Posterior vena cava (tissue), 2 donors: ENCODE measurements at regions of chr1 and their contacts with region 1.

Region 1: GRCh38 chr1:44390277-44390676 is 14.8 kb upstream of the RNF220 start:
- DNase-seq: no peak

Region 2: DNA sequence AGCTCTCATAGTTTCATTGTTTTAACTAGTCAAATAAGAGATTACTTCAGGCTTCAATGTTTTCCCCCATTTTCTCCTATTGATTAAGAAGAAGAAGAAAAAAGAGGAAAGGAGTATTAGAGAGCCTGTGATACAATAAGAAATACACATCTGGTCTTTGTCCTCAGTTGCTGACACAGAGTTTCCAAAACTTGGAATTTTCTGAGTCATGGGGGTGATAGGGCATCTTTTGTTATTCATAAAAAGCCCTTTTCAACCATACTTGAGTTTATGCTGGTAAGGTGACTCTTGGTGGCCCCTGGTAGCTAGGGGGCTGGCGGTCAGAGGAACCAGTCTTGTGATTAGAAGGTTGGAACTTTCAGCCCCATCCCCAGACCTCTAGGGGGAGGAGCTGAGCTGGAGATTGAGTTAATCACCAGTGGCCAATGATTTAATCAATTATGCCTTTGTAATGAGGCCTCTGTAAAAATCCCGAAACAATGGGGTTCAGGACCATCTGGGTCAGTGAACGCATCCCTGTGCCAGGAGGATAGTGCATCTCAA is 219.9 kb before region 1 on chr1:
- intact Hi-C with region 1: no loop called
- DNase-seq: no peak

Region 3: GRCh38 chr1:44305962-44306422 is 84.3 kb before region 1 on chr1:
- intact Hi-C with region 1: no loop called
- DNase-seq: no peak

Region 4: DNA sequence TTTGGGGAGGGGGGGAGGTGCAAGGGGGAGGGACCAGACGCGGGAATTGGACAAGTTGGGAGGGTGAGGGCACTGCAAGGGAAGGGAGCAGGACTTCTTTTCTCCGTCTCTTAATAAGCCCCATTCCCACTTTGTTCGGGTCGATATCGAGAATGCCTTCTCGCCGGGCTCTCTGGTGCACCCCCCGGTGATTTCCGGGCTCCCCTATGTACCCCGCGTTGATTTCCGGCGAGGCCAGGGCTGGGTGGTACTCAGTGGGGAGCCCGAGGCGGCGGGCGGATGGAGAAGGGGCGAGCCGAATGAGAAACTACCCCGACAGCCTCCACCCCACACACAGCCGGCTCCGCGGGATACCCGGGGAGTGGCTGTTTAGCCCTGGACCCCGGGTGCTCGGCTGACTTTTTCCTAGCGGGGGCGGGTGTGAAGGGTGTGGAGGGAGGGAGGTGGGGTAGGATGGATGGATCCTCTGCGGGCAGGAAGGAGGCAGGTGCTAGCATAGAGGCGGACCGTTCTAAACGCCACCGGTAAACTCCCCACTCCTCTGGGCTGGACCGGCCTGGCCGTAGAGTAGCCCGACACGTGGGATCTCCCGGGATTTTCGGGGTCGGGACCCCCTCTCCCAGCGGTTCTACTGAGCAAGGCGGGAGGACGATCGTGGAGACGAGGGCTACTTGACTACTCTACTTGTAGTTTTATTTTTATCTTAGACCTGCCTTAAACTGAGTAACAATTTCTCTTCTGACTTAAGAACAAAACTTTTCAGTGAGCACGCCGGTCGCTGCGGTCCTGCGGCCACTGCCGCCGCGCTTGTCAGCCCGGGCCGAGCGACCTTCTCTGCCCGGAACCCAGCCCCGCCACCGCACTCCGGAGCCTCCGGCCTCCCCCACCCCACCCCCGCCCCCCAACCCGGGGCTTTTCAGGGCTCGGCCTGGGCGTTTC is 15.8 kb after region 1 on chr1:
- intact Hi-C with region 1: loop called in 1 of 2 experiments (anchors 1 kb)
- DNase-seq: peak; percentile 82